ENCODE measurements at regions of chr1 and their contacts with region 1.

Region 1: DNA sequence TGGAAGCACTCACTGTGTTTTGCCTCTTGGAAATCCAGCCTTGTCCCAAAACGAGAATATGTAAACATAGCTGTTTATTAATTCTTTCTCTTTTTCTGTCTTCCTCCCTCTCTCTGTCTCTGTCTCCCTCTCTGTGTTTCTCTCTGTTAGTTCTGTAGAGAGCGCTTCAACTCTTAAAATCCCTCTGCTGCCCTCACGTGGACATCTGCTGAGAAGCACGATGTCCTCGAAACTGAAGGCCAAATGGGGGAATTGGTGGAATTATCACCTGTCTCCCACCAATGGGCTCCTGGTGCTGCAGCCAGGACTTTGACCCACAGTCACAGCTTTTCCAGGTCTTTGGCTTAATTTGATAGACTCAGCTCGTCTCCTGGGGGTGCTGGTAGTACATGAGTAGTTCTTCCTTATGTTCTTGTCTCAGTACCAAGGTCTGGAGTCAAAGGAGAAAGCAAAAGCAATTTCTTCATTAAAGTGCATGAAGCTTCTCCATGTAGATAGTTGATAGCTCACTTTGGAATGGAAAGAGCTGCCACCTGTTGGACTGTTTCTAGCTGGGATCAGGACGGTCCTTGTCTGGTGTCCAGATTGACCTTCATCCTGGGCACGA is 5.5 kb upstream of the GBP6 start:
- DNase-seq: peak; percentile 93
- ATAC-seq: peak; percentile 81
- H3K4me3 Mint-ChIP-seq: peak overlapping the region; percentile 65
- H3K27ac Mint-ChIP-seq: peak overlapping the region; percentile 94
- H3K4me1 Mint-ChIP-seq: peaks cover 45% of the 10 kb centered on the region
- H3K27me3 Mint-ChIP-seq: no peaks in the 10 kb centered on the region
- CTCF ChIP-seq: peak; percentile 92

Region 2: DNA sequence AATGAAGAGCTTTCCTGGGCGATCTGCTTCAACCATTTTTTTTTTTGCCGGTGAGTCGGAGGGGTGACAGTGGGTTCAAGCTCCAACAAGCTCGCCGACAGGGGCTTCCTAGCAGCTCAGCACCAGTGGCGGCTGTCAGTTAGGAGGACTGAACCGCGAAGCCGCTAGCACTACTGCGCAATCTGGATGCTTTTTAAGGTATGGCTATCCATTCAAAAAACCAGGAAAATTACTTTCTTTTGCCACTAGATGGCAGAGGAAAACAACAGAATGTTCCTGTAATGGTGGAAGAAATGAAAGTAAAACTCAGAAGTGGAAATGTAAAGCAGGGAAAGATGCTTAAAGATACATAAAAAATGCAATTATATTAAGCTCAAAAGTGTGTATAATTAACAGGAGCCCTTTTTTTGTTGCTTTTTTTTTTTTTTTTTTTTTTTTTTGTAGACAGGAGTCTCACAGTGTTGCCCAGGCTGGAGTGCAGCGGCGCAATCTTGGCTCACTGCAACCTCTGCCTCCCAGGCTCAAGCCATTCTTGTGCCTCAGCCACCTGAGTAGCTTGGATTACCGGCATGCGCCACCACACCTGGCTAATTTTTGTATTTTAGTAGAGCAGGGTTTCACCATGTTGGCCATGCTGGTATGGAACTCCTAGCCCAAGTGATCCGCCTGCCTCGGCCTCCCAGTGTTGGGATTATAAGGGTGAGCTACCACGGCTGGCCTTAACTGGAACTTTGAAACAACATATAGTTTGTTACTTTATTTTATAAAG is 374.4 kb before region 1 on chr1:
- CTCF ChIA-PET with region 1: interaction called, 24 read pairs
- POLR2A ChIA-PET with region 1: no interaction called
- intact Hi-C with region 1: loop called (anchors 5 kb)
- DNase-seq: peak; percentile 48
- ATAC-seq: peak; percentile 63
- H3K4me3 Mint-ChIP-seq: peak overlapping the region; percentile 6
- H3K27ac Mint-ChIP-seq: peak overlapping the region; percentile 87
- H3K4me1 Mint-ChIP-seq: peaks cover 86% of the 10 kb centered on the region
- H3K27me3 Mint-ChIP-seq: no peaks in the 10 kb centered on the region
- CTCF ChIP-seq: peak; percentile 77

Region 3: DNA sequence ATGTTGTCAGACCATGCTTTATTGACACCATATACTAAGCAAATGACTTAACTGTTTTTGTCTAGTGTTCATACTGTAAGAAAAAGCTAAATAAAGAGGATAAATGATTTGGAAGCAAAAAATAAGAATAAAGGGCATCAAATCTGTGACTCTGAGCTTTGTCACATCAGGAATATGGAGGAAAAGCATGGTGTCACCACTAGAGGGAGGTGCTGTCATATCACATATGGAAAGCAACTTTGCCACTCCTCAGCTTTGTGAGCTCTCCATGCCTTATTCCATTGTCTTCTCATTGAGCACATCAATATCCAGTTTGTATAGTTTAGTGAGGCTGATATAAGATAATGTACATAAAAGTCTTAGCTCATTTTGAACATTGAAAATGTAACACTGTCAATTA is 272.6 kb before region 1 on chr1:
- CTCF ChIA-PET with region 1: interaction called, 22 read pairs
- POLR2A ChIA-PET with region 1: no interaction called
- intact Hi-C with region 1: loop called (anchors 5 kb)
- DNase-seq: peak; percentile 59
- ATAC-seq: no peak
- H3K4me3 Mint-ChIP-seq: no peak overlapping the region
- H3K27ac Mint-ChIP-seq: no peak overlapping the region
- H3K4me1 Mint-ChIP-seq: peaks cover 7% of the 10 kb centered on the region
- H3K27me3 Mint-ChIP-seq: no peaks in the 10 kb centered on the region
- CTCF ChIP-seq: peak; percentile 42

Region 4: DNA sequence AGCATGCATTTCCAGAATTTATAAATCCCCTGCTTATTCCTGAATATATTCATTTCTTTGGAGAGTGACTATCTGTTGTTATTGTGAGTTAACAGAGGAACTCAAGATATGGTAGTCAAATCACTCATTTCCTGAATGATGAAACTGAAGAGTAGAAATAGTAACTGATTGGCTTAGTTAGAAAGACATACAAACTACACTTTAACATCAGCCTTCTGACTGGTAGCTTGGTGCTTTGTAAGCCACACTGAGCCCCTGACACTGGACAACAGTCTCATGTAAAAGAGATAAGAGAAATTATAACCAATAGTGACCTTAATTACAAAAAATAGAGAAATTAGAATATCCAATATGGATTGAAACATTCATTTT is 187.3 kb before region 1 on chr1:
- CTCF ChIA-PET with region 1: interaction called, 12 read pairs
- POLR2A ChIA-PET with region 1: no interaction called
- intact Hi-C with region 1: no loop called
- DNase-seq: no peak
- ATAC-seq: peak; percentile 64
- H3K4me3 Mint-ChIP-seq: no peak overlapping the region
- H3K27ac Mint-ChIP-seq: peak overlapping the region; percentile 52
- H3K4me1 Mint-ChIP-seq: peaks cover 4% of the 10 kb centered on the region
- H3K27me3 Mint-ChIP-seq: no peaks in the 10 kb centered on the region
- CTCF ChIP-seq: no peak

Region 5: GRCh38 chr1:89261926-89262515 is 96.4 kb before region 1 on chr1:
- CTCF ChIA-PET with region 1: interaction called, 102 read pairs
- POLR2A ChIA-PET with region 1: interaction called, 5 read pairs
- intact Hi-C with region 1: no loop called
- DNase-seq: no peak
- ATAC-seq: no peak
- H3K4me3 Mint-ChIP-seq: peak overlapping the region; percentile 2
- H3K27ac Mint-ChIP-seq: peak overlapping the region; percentile 67
- H3K4me1 Mint-ChIP-seq: peaks cover 78% of the 10 kb centered on the region
- H3K27me3 Mint-ChIP-seq: no peaks in the 10 kb centered on the region
- CTCF ChIP-seq: no peak

Region 6: DNA sequence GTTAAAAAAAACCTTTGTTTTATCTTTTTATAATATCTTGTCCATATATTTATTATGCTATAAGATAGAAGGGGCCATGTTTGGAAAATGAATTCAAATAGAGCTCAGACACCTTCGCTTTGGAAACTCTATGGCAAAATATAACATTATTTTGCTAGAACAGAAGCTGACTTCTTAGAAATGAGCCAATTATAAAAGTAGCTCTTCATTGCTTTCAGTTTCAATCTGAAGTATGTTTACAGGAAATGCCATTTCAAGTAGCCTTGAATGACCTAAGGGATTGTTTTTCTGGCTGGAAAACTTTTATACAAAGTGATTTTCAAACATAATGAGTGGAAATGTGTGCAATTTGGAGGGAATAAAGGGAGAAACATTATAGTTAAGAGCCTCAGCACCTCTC is 47.9 kb before region 1 on chr1:
- CTCF ChIA-PET with region 1: interaction called, 14 read pairs
- POLR2A ChIA-PET with region 1: interaction called, 6 read pairs
- intact Hi-C with region 1: no loop called
- DNase-seq: no peak
- ATAC-seq: peak; percentile 63
- H3K4me3 Mint-ChIP-seq: peak overlapping the region; percentile 18
- H3K27ac Mint-ChIP-seq: peak overlapping the region; percentile 94
- H3K4me1 Mint-ChIP-seq: peaks cover 58% of the 10 kb centered on the region
- H3K27me3 Mint-ChIP-seq: no peaks in the 10 kb centered on the region
- CTCF ChIP-seq: no peak

Measured in activated CD8-positive, alpha-beta T cell treated with anti-CD3 and anti-CD28 coated beads for 36 hours (primary cell).